PC-3 (cell line): ENCODE measurements at regions of chr6 and their contacts with region 1.

Region 1: GRCh38 chr6:15036690-15037245 is 209.1 kb upstream of the JARID2 start:
- DNase-seq: no peak
- ATAC-seq: no peak
- H3K4me3 ChIP-seq: no peak overlapping the region
- H3K27ac ChIP-seq: no peak overlapping the region
- H3K4me1 ChIP-seq: no peaks in the 10 kb centered on the region
- H3K27me3 ChIP-seq: no peaks in the 10 kb centered on the region
- CTCF ChIP-seq: no peak

Region 2: GRCh38 chr6:15014987-15015386 is 21.8 kb before region 1 on chr6:
- CTCF ChIA-PET with region 1: interaction called, 12 read pairs
- POLR2A ChIA-PET with region 1: no interaction called
- intact Hi-C with region 1: no loop called
- DNase-seq: no peak
- ATAC-seq: no peak
- H3K4me3 ChIP-seq: no peak overlapping the region
- H3K27ac ChIP-seq: no peak overlapping the region
- H3K4me1 ChIP-seq: no peaks in the 10 kb centered on the region
- H3K27me3 ChIP-seq: no peaks in the 10 kb centered on the region
- CTCF ChIP-seq: no peak

Region 3: DNA sequence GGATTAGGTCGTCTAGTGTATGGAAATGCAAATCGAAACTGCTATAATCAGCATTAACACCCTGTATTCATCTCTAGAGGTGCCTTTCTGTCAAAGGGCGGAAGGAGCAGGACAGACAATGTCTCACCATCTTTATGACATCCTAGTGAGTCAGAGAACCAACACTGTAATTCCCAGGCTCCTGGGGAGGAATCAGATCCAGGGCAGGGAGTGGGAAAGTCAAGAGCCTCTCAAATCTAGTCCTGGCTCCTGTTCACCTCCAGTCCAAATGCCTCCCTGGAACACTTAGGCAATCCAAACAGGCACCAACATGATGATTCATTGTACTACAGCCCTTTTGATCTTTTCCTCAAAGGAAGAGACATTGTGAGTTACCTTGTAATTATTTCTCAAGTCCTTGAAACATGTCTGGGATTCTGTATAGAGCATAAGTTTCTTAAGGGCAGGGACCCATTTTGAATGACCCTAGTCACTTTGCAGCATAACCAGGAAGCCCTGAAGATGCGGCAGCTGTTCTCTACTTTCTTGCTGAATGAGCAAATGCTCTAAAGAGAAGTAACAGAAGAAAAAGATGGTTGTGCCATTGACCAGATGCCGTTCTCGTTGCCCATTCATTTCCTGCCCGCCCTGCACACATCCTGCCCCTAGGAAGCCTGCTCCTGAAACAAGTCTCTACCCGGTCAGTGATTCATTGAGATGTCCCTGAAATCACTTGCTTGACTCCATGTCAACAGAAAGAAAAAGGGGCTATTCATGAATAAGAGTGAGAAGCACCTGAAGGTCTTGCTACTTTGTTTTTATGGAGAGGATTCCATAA is 96.3 kb after region 1 on chr6:
- CTCF ChIA-PET with region 1: no interaction called
- POLR2A ChIA-PET with region 1: no interaction called
- intact Hi-C with region 1: no loop called
- DNase-seq: peak; percentile 97
- ATAC-seq: peak; percentile 98
- H3K4me3 ChIP-seq: peak overlapping the region; percentile 24; the same call in 1 of the 2 replicates
- H3K27ac ChIP-seq: peak overlapping the region; percentile 92
- H3K4me1 ChIP-seq: peaks cover 23% of the 10 kb centered on the region
- H3K27me3 ChIP-seq: no peaks in the 10 kb centered on the region
- CTCF ChIP-seq: no peak